ENCODE measurements at regions of chr2 and their contacts with region 1.

Region 1: GRCh38 chr2:134718817-134719814 is at the start of gene TMEM163:
- DNase-seq: no peak
- ATAC-seq: peak in 2 of 4 donors; percentile 47 to 57
- H3K4me3 ChIP-seq: peak within 1 kb of the TSS; percentile 24 to 64 (median 53)
- H3K27ac ChIP-seq: peak within 1 kb of the TSS in 1 of 12 donors; percentile 19
- H3K4me1 ChIP-seq: peaks cover 0 to 20% (median 8%) of the 10 kb centered on the region in 12 donors
- H3K27me3 ChIP-seq: peaks cover 12 to 83% (median 40%) of the 10 kb centered on the region in 9 donors
- CTCF ChIP-seq: no peak
- POLR2A ChIP-seq: no peak
- total RNA-seq, gene TMEM163: 0.14 to 1.4 (median 0.47) TPM

Region 2: DNA sequence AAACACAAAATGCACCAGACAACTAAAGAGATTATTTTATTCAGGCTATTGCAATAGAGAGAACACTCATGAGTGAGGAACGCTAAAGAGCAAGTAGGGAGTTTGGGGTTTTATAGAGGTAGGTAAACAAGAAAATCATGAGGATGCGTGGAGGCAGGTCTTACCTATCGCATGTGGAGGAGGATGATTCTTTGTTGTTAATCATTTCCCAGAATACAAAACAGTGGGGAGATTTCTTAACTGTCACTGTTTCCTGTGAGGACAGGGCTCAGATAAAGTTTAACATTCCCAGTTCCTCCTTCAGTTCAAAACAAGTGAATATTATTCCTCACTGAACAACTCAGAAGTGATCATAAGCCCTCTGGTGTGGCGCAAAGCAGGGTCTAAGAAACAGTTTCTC is 621.4 kb before region 1 on chr2:
- intact Hi-C with region 1: no loop called
- DNase-seq: no peak
- ATAC-seq: no peak
- H3K4me3 ChIP-seq: no peak overlapping the region
- H3K27ac ChIP-seq: no peak overlapping the region
- H3K4me1 ChIP-seq: no peaks in the 10 kb centered on the region
- H3K27me3 ChIP-seq: no peaks in the 10 kb centered on the region
- CTCF ChIP-seq: no peak
- POLR2A ChIP-seq: no peak

Region 3: GRCh38 chr2:134679745-134680144 is 39.4 kb before region 1 on chr2:
- intact Hi-C with region 1: loop called in 1 of 10 experiments (anchors 5 kb)
- DNase-seq: no peak
- ATAC-seq: no peak
- H3K4me3 ChIP-seq: no peak overlapping the region
- H3K27ac ChIP-seq: no peak overlapping the region
- H3K4me1 ChIP-seq: peaks cover 0 to 43% (median 9%) of the 10 kb centered on the region in 12 donors
- H3K27me3 ChIP-seq: no peaks in the 10 kb centered on the region
- CTCF ChIP-seq: no peak
- POLR2A ChIP-seq: no peak